ENCODE measurements at regions of chr21 and their contacts with region 1.

Region 1: DNA sequence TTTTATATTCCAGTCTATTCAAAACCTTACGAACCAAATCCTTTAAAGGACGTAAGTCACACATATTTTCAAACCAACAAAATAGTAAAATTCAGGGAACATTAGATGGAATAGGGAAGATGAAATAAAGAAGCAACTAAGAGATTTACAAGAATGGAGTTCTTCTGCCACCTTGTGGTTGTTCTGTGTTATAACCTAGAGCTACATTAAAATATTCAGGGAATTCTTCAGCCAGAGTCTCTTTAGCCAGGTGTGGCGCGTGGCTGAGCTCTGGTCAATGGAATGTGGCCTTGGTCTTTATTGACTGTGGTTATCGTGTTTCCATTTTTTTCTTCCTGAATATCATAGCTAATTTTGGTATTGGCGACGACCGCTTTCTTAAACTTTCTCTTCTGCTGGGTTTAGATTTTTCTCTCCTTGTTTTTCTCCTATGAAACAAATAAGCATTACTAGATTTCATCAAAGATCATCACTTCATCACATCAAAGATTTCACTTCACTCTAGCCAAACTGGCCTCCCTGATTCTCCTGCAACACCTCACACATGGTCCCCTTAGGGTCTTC is 221.3 kb downstream of the MRPL39 start:
- DNase-seq: no peak
- H3K4me3 Mint-ChIP-seq: no peak overlapping the region
- H3K27ac Mint-ChIP-seq: no peak overlapping the region
- H3K4me1 Mint-ChIP-seq: peaks cover 2% of the 10 kb centered on the region
- H3K27me3 Mint-ChIP-seq: peaks cover under 1% of the 10 kb centered on the region

Region 2: DNA sequence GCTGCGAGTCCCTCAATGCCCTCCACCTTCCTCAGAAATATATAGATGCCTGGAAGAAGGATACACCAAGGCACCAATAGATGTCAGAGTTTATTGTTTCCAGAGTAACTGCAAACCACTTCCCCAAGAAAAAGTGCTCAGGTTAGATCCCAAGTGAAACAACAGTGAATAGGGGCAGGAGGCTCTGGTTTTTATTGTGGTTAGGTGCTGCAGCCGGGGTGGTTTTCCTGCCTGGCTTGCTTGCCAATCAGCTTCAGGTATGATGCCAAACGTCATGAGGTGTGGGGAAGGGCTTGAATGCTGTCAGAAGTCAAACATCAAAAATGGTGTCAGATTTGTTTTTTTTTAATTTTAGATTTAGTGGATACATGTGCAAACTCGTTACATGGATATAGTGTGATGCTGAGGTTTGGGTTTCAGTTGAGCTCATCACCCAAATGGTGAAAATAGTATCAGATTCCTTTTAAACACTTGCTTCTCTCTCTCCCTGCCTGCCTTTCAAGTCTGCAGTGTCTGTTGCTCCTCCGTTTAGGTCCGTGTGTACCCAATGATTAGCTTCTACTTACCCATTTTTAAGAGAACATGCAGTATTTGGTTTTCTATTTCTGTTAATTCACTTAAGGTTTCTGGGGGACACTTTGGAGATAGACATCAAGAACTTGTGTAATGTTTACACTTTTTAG is 1095.7 kb before region 1 on chr21:
- CTCF ChIA-PET with region 1: no interaction called
- DNase-seq: peak; percentile 79
- H3K4me3 Mint-ChIP-seq: peak overlapping the region; percentile 59
- H3K27ac Mint-ChIP-seq: peak overlapping the region; percentile 58
- H3K4me1 Mint-ChIP-seq: peaks cover 10% of the 10 kb centered on the region
- H3K27me3 Mint-ChIP-seq: no peaks in the 10 kb centered on the region

Region 3: GRCh38 chr21:24693779-24694178 is 692.2 kb before region 1 on chr21:
- CTCF ChIA-PET with region 1: no interaction called
- DNase-seq: no peak
- H3K4me3 Mint-ChIP-seq: no peak overlapping the region
- H3K27ac Mint-ChIP-seq: no peak overlapping the region
- H3K4me1 Mint-ChIP-seq: no peaks in the 10 kb centered on the region
- H3K27me3 Mint-ChIP-seq: no peaks in the 10 kb centered on the region

Region 4: DNA sequence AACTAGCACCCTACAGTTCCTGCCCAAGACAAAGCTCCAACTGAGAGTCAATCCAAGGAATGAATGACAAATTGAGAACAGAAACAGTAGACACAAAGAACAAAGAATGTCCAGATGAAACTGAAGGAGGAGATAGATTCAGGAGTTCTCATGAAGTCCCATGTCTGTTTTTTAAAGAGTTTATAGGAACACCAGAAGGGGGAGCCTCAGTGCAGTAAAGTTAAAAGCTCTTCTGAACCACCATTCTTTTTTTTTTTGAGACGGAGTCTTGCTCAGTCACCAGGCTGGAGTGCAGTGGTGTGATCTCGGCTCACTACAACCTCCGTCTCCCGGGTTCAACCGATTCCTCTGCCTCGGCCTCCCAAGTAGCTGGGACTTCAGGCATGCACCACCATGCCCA is 102.3 kb before region 1 on chr21:
- CTCF ChIA-PET with region 1: interaction called, 21 read pairs
- DNase-seq: no peak
- H3K4me3 Mint-ChIP-seq: no peak overlapping the region
- H3K27ac Mint-ChIP-seq: no peak overlapping the region
- H3K4me1 Mint-ChIP-seq: no peaks in the 10 kb centered on the region
- H3K27me3 Mint-ChIP-seq: no peaks in the 10 kb centered on the region

Region 5: GRCh38 chr21:25307489-25307888 is 78.5 kb before region 1 on chr21:
- CTCF ChIA-PET with region 1: no interaction called
- DNase-seq: no peak
- H3K4me3 Mint-ChIP-seq: no peak overlapping the region
- H3K27ac Mint-ChIP-seq: no peak overlapping the region
- H3K4me1 Mint-ChIP-seq: no peaks in the 10 kb centered on the region
- H3K27me3 Mint-ChIP-seq: no peaks in the 10 kb centered on the region

Region 6: GRCh38 chr21:25501996-25502665 is 116.1 kb after region 1 on chr21:
- CTCF ChIA-PET with region 1: no interaction called
- DNase-seq: no peak
- H3K4me3 Mint-ChIP-seq: no peak overlapping the region
- H3K27ac Mint-ChIP-seq: no peak overlapping the region
- H3K4me1 Mint-ChIP-seq: peaks cover 7% of the 10 kb centered on the region
- H3K27me3 Mint-ChIP-seq: no peaks in the 10 kb centered on the region